Head of caudate nucleus (tissue), 42 donors: ENCODE measurements at regions of chr17 and their contacts with region 1.

Region 1: DNA sequence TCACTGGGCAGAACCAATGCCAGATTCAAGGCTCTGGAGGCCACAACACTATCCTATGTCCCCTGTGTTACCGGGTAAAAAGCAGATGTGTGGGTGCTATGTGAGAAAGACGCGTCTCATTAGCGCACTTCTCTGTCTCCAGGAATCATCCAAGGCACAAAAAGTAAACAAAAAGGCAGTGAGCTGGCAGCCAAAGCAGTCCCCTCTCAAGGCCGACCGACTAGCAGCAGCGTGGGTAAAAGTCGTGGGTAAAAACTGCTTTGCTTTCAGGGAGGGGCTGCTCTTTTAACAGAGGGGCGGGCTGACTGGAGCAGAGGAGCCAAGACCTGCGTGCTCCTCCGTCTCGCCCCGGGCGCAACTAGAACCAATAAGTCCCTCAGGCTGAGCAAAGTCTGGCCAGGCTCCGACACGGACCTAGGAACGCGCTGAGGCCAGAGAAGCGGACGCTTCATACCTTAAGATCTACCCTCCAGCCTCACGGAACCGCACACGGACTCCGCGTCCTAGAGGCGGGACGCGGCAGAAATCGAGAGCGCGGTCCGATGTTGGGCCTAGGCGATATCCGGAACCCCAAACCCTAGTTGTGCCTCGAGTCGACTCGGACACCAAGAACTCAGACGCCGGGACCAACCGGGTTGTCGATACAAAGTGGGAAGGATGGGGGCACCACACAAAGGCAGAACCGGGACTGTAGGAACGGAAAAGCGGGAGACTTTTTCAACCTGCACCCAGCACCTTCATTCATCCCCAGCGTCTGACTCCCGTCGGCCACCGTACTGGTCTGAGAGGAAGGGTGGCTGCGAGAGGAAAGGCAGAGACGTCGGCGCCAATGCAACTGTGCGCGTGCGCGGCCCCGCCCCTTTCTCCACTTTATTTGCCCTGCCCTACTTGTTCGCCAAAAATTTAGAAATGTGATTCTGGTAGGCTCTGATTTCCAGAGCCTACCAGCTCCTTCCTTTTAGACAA is at the start of gene INTS2:
- DNase-seq: peak; percentile 90 to 99 (median 97)

Region 2: DNA sequence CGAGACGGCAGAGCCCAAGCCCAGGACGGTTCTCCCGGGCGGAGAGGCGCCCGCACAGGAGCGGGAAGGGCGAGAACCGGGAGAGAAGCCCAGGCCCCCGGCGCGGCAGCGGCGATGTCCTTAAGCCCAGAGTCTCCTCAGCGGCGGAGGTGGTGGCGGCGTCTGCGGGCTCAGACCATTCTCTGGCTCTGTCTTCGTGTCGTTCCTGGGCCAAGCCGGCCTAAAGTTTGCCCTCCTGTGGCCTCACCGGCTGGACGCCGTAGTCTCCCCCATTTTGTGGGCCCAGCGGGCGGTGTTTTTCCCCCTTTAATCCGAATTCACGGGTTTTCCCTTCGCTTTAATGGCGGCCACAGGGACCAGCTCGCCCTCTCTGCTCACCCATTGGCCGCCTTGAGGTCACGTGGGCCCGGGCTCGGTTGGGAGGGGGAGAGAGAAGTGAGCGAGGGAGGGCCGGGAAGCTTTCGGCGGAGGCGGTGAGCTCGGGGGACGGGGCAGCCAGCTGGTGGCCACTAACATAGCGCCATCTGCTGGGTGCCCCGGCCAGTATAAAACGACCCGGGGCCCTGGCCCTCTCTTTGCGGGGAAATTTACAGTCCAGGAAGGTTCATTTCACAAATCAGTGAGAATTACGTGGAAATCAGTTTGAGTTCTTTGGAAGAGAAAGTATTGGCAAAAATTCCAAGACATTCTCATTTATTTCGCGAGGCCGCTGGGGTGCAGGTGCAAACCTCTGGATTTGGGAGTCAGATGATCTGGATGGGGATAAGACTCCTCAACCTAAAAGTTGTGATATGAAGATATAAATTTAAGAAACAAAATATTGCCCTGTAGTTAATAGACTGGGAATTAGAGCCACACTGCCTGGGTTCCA is 138.3 kb after region 1 on chr17:
- intact Hi-C with region 1: loop called (anchors 5 kb)
- DNase-seq: peak; percentile 96 to 100 (median 99)

Region 3: GRCh38 chr17:62381561-62381960 is 454.1 kb after region 1 on chr17:
- intact Hi-C with region 1: no loop called
- DNase-seq: no peak